Gastrocnemius medialis (tissue), 4 donors: ENCODE measurements at regions of chr1 and their contacts with region 1.

Region 1: DNA sequence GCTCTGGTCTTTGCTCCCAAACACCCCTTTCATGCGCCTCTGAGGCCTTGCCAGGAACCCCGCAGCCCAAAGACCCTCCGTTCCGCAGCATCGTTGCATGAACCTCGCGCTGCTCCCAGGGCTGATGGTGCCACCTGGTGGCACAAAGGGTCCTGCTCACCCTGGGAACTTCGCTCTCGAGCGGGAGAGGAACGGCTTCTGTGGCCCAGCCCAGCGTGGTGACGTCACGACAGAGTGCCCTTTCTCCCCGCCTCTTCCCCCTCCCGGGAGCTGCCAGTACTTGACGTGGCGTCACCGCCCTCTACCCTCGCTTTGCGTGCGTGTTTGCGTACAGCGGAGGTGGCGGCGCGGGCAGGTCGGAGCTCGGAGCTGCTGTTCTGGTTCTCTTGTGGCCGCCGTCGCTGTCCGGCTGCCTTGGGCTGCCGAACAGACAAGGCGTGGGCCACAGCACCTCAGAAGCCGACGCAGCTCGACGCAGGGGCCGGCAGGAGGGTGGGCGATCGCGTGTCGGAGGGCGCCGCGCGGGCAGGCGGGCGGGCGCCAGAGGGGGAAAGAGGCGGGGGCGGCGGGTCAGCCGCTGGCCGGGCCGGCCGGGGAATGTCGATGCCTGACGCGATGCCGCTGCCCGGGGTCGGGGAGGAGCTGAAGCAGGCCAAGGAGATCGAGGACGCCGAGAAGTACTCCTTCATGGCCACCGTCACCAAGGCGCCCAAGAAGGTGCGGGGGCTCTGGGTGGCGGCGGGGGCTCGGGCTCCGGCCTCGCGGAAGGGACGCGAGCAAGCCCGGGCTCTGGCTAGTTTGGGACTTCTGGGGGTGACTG is at the start of gene AHCYL1:
- DNase-seq: peak; percentile 99 to 100
- ATAC-seq: peak; percentile 94 to 95
- H3K4me3 ChIP-seq: peak within 1 kb of the TSS; percentile 74 to 95 (median 82)
- H3K27ac ChIP-seq: peak within 1 kb of the TSS; percentile 92 to 99 (median 96)
- H3K4me1 ChIP-seq: peaks cover 54 to 58% of the 10 kb centered on the region in 2 donors
- H3K27me3 ChIP-seq: no peaks in the 10 kb centered on the region
- CTCF ChIP-seq: peak; percentile 98 to 99 (median 98)
- POLR2A ChIP-seq: peak; percentile 100
- total RNA-seq, gene AHCYL1: 42.3 to 109 (median 69.6) TPM

Region 2: DNA sequence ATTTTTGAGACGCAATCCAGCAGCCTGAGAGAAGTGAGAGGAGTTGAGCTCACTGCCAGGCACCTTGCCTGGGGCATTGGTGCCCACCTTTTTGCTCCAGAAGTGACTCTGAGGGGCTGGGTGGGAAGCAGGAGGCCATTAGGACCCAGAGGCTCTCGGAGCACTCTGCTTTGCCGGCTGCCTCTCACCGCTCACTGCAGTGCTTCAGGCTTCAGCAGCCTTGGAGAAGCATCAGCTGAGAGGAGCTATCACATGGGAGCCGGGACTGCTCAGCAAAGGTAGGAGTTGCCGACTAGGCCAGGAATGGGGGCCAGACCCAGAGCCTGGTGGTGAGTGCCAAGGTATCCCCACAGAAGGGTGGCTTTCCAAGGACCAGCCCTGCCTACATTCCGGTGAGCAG is 445.0 kb before region 1 on chr1 and contains the start of gene GPR61:
- in situ Hi-C with region 1: loop called in 2 of 4 experiments (anchors 5 to 10 kb)
- intact Hi-C with region 1: no loop called
- DNase-seq: no peak
- ATAC-seq: no peak
- H3K4me3 ChIP-seq: no peak within 1 kb of the TSS
- H3K27ac ChIP-seq: no peak within 1 kb of the TSS
- H3K4me1 ChIP-seq: peaks cover 42 to 45% of the 10 kb centered on the region in 2 donors
- H3K27me3 ChIP-seq: no peaks in the 10 kb centered on the region
- CTCF ChIP-seq: no peak
- POLR2A ChIP-seq: no peak
- total RNA-seq, gene GPR61: not detected

Region 3: GRCh38 chr1:109620841-109621286 is 363.8 kb before region 1 on chr1:
- in situ Hi-C with region 1: loop called in 1 of 4 experiments (anchors 10 kb)
- intact Hi-C with region 1: no loop called
- DNase-seq: peak; percentile 69 to 75
- ATAC-seq: peak; percentile 48 to 51
- H3K4me3 ChIP-seq: peak overlapping the region; percentile 64 to 87 (median 66)
- H3K27ac ChIP-seq: peak overlapping the region; percentile 62 to 73 (median 71)
- H3K4me1 ChIP-seq: peaks cover 4 to 24% of the 10 kb centered on the region in 2 donors
- H3K27me3 ChIP-seq: peaks cover 0 to 4% (median 0%) of the 10 kb centered on the region in 3 donors
- CTCF ChIP-seq: no peak
- POLR2A ChIP-seq: no peak

Region 4: GRCh38 chr1:109643385-109644230 is 341.1 kb before region 1 on chr1:
- in situ Hi-C with region 1: loop called in 3 of 4 experiments (anchors 5 to 10 kb)
- intact Hi-C with region 1: loop called (anchors 2 kb)
- DNase-seq: peak; percentile 60 to 69
- ATAC-seq: peak; percentile 92 to 95
- H3K4me3 ChIP-seq: peak overlapping the region in 1 of 4 donors; percentile 14
- H3K27ac ChIP-seq: no peak overlapping the region
- H3K4me1 ChIP-seq: peaks cover 0 to 6% of the 10 kb centered on the region in 2 donors
- H3K27me3 ChIP-seq: no peaks in the 10 kb centered on the region
- CTCF ChIP-seq: peak; percentile 73 to 92 (median 85)
- POLR2A ChIP-seq: no peak

Region 5: DNA sequence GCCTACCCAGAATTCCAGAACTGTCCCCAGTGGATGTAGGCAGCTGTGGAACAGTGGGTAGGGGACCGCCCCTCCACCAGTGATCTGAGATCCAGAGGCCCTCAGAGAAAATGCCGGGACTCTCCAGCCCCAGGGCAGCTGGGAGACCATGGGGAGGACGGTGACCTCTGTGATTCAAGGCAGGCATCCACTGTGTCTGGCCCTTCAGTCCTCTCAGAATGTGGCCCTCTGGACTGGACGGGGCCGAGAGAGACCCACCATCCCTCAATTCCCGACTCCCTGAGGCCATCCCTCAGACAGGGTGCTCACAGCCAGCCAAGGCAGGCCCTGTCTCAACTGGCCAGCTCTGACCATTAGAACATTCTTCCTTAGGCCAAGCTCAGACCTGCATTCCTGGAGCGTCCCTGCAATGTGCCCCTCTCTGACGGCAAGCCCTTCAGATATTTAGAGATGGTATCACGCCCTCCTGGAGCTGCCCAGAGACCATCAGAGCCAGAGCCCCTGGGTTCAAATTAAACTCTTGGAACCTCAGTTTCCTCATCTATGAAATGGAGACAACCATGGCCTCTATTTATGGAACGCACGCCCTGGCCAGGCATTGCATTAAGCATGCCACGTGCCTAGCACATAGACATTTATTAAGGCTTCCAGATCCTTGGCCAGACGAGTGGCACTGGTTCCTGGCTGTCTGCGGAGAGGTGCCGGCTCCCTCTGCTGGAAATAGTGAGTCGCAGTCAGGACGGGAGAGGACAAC is 211.3 kb before region 1 on chr1:
- in situ Hi-C with region 1: loop called (anchors 5 kb)
- intact Hi-C with region 1: loop called (anchors 1 kb)
- DNase-seq: peak; percentile 82 to 87
- ATAC-seq: peak; percentile 88 to 93
- H3K4me3 ChIP-seq: no peak overlapping the region
- H3K27ac ChIP-seq: peak overlapping the region in 1 of 4 donors; percentile 8
- H3K4me1 ChIP-seq: peaks cover 0 to 3% of the 10 kb centered on the region in 2 donors
- H3K27me3 ChIP-seq: no peaks in the 10 kb centered on the region
- CTCF ChIP-seq: peak; percentile 78 to 90 (median 85)
- POLR2A ChIP-seq: no peak

Region 6: DNA sequence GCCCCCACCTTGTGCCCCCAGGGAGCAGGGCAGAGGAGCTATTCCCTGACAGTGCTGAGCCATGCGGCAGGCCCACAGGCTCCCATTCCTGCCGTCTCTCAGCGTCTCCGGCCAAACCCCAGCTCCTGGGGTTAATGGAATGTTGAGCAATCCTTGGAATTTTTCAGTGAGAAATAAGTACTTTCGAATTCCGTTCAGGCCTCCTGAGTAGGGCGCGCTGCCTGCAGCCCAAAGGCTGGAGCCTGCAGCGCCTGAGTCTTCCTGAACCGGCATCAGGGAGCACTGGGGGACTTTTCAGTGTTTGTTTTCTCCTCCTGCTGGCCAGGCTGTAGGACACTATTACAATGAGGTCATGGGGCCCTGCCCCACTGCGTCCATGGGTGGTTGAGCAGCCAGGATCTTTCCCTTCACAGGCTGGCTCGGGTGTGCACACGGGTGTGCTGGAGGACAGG is 107.3 kb before region 1 on chr1:
- in situ Hi-C with region 1: no loop called
- intact Hi-C with region 1: loop called (anchors 5 kb)
- DNase-seq: peak; percentile 40 to 73
- ATAC-seq: peak; percentile 71 to 83
- H3K4me3 ChIP-seq: peak overlapping the region in 1 of 4 donors; percentile 14
- H3K27ac ChIP-seq: peak overlapping the region; percentile 65 to 81 (median 77)
- H3K4me1 ChIP-seq: peaks cover 8 to 21% of the 10 kb centered on the region in 2 donors
- H3K27me3 ChIP-seq: no peaks in the 10 kb centered on the region
- CTCF ChIP-seq: peak in 2 of 5 experiments; percentile 14 to 34
- POLR2A ChIP-seq: no peak

Region 7: GRCh38 chr1:109917768-109918606 is 66.7 kb before region 1 on chr1:
- in situ Hi-C with region 1: loop called in 1 of 4 experiments (anchors 5 kb)
- intact Hi-C with region 1: loop called (anchors 2 kb)
- DNase-seq: no peak
- ATAC-seq: no peak
- H3K4me3 ChIP-seq: no peak overlapping the region
- H3K27ac ChIP-seq: peak overlapping the region in 1 of 4 donors; percentile 9
- H3K4me1 ChIP-seq: peaks cover 11 to 16% of the 10 kb centered on the region in 2 donors
- H3K27me3 ChIP-seq: no peaks in the 10 kb centered on the region
- CTCF ChIP-seq: no peak
- POLR2A ChIP-seq: no peak